Lower lobe of right lung (tissue), 2 donors: ENCODE measurements at regions of chr17 and their contacts with region 1.

Region 1: DNA sequence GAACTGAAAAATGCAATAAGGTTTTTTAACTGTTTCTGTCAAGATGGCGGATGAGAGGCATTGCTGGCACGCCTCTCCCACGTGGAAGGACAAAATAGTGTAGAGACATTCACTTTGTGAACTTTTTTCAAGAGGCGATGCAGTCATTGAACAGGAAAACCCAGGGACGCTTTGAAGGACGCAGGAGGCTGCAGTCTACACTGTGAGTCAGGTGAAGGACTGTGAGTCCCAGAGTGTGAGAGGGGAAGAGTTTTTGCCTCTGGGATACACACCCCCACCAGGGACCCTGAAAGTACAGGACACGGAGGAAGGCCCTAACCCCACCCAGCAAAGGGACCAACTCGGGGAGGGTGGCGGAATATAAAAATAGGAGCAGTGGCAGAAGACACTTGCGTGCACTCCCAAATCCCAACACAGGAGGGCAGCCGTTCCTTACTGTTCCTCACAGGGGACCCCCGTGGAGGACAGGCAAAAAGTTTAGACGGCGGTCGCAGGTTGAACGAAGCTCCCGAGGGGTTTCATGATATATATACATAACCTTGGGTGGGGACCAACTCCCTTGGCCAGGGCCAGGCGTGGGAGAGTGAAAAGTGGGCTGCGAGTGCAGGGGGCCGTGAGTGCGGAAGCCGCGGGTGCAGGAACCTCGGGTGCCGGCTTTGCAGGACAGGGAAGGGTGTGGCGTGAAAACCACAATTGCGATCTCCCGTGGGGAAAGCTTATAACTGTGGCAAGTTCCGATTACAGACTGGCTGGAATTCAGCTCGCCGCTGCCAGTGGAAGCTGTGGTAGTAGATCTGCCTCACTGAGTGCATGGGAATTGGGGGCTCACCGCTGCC is 82.0 kb upstream of the ALOX12 start:
- DNase-seq: peak; percentile 70
- ATAC-seq: peak; percentile 79 to 80
- H3K4me3 ChIP-seq: peak overlapping the region; percentile 47
- H3K27ac ChIP-seq: no peak overlapping the region
- H3K4me1 ChIP-seq: peaks cover 10% of the 10 kb centered on the region
- H3K27me3 ChIP-seq: peaks cover 5% of the 10 kb centered on the region
- CTCF ChIP-seq: peak; percentile 77

Region 2: DNA sequence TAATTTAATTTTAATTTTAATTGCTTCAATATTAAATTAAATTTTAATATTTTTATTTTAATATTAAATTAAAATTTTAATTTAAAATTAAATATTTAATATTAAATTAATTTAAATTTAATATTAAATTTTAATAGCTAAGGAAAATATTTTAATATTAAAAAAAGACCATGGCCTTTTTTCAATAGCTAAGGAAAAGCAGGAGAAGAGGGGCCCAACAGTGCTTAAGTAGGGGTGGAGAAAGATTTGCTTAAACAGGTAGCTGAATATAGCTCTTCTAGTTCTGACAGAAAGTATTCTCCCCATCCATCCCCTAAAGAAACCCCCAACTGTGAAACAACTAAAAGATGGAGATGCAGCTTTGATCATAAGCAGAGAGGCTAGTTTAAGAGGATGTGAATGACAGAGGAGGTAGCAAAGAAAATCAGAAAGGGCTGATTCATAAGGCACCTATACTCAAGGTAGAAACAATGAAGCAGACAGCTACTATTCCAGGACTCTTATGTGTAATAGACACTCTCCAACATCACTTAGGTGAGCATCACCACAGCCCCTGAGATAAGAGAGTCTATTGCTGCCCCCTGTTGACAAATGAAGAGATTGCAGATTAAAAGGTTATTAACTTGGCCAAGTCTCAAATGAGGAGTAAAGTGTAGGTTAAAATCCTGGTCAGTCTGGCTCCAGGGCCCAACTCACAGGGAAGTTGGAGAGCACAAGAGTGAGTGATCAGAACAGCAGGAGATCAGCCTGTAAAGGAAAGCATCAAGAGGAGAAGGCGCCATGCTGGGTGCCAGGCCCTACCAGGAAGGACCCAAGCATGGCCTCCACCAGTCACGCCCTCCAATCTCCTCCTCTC is 90.8 kb after region 1 on chr17:
- intact Hi-C with region 1: loop called (anchors 10 kb)
- DNase-seq: no peak
- ATAC-seq: peak; percentile 81 to 85
- H3K4me3 ChIP-seq: no peak overlapping the region
- H3K27ac ChIP-seq: no peak overlapping the region
- H3K4me1 ChIP-seq: peaks cover under 1% of the 10 kb centered on the region
- H3K27me3 ChIP-seq: no peaks in the 10 kb centered on the region
- CTCF ChIP-seq: peak; percentile 70